Posterior cingulate gyrus (tissue), 11 donors: ENCODE measurements at regions of chr1 and their contacts with region 1.

Region 1: DNA sequence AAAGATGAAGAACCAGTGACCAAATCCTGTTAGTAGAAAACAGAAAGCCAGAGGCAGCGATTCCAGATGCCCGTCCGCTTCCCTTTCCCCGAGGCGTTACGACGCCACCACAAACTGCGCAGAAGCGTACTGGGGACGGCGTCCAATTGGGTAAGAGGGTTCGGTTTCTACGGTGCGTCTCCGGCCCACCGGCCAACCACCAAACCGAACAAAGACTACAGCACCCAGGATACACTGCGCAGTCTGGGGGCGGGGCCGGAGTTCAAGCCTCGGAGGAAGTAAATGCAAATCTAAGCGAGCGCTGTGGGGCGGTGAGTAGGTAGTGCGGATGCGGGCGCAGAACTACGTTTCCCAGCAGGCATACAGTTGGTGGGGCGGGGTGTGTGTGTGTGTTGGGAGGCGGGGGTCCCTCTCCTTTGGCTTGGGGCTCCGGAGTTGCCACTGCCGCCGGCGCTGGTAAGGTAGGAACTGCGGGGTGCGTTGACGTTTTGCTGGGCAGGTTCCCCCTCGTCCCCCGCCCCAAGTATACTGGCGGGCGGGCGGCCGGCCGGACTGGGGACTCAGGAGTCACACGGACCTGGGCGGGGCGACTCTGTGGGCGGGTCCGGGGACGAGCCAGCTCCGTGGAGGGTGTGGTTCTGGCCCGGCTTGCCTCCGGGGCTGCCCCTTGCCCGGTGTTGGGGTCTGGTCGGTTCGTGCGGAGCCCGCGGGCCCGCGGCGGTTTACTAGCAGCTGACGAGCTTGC is at the starts of genes SWT1 and TRMT1L:
- DNase-seq: peak; percentile 99 to 100 (median 100)

Region 2: GRCh38 chr1:184754476-184755225 is 402.4 kb before region 1 on chr1 and contains the start of gene EDEM3:
- intact Hi-C with region 1: loop called (anchors 1 kb)
- DNase-seq: peak; percentile 98 to 100 (median 99)

Region 3: DNA sequence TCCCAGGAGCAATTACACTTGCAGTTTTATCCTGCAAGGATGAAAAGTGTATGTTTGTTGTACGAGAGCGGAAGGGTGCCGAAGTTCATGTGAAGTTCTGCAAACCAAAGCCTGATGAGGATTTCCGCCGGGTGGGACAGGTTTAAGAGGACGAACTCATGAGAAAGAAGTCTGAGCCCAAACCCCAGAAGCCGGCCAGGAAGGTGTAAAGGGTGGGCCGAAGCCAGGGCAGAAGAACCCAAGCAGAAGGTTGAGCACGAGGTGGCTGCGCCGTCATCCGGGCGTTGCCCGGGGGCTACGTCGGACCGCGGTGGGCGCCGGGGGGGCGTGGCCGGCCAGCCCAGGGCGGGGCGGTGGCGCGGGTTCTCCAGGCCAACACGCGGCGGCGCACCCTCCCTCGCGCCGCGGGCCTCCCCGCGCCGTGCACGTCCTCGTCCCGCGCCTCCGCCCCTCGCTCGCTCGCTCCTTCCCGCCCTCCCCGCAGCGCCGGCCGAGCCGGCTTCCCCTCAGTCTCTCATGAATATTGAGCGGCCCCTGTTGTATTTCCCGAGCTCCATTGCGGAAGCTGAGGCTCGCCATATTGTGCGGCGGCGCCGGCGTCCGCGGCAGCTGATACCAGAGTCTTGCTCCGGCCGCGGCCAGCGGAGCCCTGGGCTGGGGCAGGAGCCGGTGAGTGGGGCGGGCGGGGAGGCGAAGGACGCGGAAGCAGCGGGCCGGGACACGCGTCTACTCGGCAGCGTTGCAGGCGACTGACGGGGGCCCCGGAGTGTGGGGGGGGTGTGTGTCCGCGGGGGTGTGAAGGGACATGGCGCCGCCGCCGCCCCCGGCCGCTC is 111.8 kb before region 1 on chr1 and contains the start of gene RNF2:
- intact Hi-C with region 1: loop called (anchors 2 kb)
- DNase-seq: peak; percentile 70 to 96 (median 78)